ENCODE measurements at regions of chr7 and their contacts with region 1.

Region 1: GRCh38 chr7:116180302-116180701 is 30.0 kb upstream of the TES start:
- DNase-seq: peak; percentile 21
- ATAC-seq: peak; percentile 74
- H3K4me3 Mint-ChIP-seq: no peak overlapping the region
- H3K27ac Mint-ChIP-seq: no peak overlapping the region
- H3K4me1 Mint-ChIP-seq: peaks cover 7% of the 10 kb centered on the region
- H3K27me3 Mint-ChIP-seq: no peaks in the 10 kb centered on the region

Region 2: GRCh38 chr7:115747174-115747573 is 433.1 kb before region 1 on chr7:
- CTCF ChIA-PET with region 1: no interaction called
- POLR2A ChIA-PET with region 1: no interaction called
- intact Hi-C with region 1: no loop called
- DNase-seq: no peak
- ATAC-seq: no peak
- H3K4me3 Mint-ChIP-seq: no peak overlapping the region
- H3K27ac Mint-ChIP-seq: no peak overlapping the region
- H3K4me1 Mint-ChIP-seq: no peaks in the 10 kb centered on the region
- H3K27me3 Mint-ChIP-seq: no peaks in the 10 kb centered on the region

Region 3: GRCh38 chr7:115910541-115911164 is 269.6 kb before region 1 on chr7:
- CTCF ChIA-PET with region 1: no interaction called
- POLR2A ChIA-PET with region 1: no interaction called
- intact Hi-C with region 1: no loop called
- DNase-seq: no peak
- ATAC-seq: no peak
- H3K4me3 Mint-ChIP-seq: no peak overlapping the region
- H3K27ac Mint-ChIP-seq: no peak overlapping the region
- H3K4me1 Mint-ChIP-seq: no peaks in the 10 kb centered on the region
- H3K27me3 Mint-ChIP-seq: peaks cover 5% of the 10 kb centered on the region

Region 4: GRCh38 chr7:116165717-116166116 is 14.6 kb before region 1 on chr7:
- CTCF ChIA-PET with region 1: interaction called, 15 read pairs
- POLR2A ChIA-PET with region 1: no interaction called
- intact Hi-C with region 1: no loop called
- DNase-seq: no peak
- ATAC-seq: no peak
- H3K4me3 Mint-ChIP-seq: no peak overlapping the region
- H3K27ac Mint-ChIP-seq: no peak overlapping the region
- H3K4me1 Mint-ChIP-seq: peaks cover 8% of the 10 kb centered on the region
- H3K27me3 Mint-ChIP-seq: peaks cover 15% of the 10 kb centered on the region

Region 5: GRCh38 chr7:116218051-116218645 is 37.8 kb after region 1 on chr7:
- CTCF ChIA-PET with region 1: interaction called, 17 read pairs
- POLR2A ChIA-PET with region 1: no interaction called
- intact Hi-C with region 1: no loop called
- DNase-seq: no peak
- ATAC-seq: no peak
- H3K4me3 Mint-ChIP-seq: no peak overlapping the region
- H3K27ac Mint-ChIP-seq: peak overlapping the region; percentile 72
- H3K4me1 Mint-ChIP-seq: peaks cover 86% of the 10 kb centered on the region
- H3K27me3 Mint-ChIP-seq: no peaks in the 10 kb centered on the region

Region 6: GRCh38 chr7:116249708-116250553 is 69.6 kb after region 1 on chr7:
- CTCF ChIA-PET with region 1: interaction called, 15 read pairs
- POLR2A ChIA-PET with region 1: no interaction called
- intact Hi-C with region 1: no loop called
- DNase-seq: no peak
- ATAC-seq: peak; percentile 72
- H3K4me3 Mint-ChIP-seq: no peak overlapping the region
- H3K27ac Mint-ChIP-seq: peak overlapping the region; percentile 58
- H3K4me1 Mint-ChIP-seq: peaks cover 36% of the 10 kb centered on the region
- H3K27me3 Mint-ChIP-seq: no peaks in the 10 kb centered on the region

Region 7: GRCh38 chr7:116525913-116526861 is 345.9 kb after region 1 on chr7:
- CTCF ChIA-PET with region 1: interaction called, 3 read pairs
- POLR2A ChIA-PET with region 1: no interaction called
- intact Hi-C with region 1: loop called in 1 of 2 experiments (anchors 1 kb)
- DNase-seq: peak; percentile 80
- ATAC-seq: peak; percentile 96
- H3K4me3 Mint-ChIP-seq: peak overlapping the region; percentile 71
- H3K27ac Mint-ChIP-seq: no peak overlapping the region
- H3K4me1 Mint-ChIP-seq: peaks cover 20% of the 10 kb centered on the region
- H3K27me3 Mint-ChIP-seq: peaks cover 59% of the 10 kb centered on the region

Measured in activated CD4-positive, alpha-beta T cell treated with anti-CD3 and anti-CD28 coated beads for 36 hours (primary cell).